MCF 10A (cell line): ENCODE measurements at regions of chr5 and their contacts with region 1.

Region 1: DNA sequence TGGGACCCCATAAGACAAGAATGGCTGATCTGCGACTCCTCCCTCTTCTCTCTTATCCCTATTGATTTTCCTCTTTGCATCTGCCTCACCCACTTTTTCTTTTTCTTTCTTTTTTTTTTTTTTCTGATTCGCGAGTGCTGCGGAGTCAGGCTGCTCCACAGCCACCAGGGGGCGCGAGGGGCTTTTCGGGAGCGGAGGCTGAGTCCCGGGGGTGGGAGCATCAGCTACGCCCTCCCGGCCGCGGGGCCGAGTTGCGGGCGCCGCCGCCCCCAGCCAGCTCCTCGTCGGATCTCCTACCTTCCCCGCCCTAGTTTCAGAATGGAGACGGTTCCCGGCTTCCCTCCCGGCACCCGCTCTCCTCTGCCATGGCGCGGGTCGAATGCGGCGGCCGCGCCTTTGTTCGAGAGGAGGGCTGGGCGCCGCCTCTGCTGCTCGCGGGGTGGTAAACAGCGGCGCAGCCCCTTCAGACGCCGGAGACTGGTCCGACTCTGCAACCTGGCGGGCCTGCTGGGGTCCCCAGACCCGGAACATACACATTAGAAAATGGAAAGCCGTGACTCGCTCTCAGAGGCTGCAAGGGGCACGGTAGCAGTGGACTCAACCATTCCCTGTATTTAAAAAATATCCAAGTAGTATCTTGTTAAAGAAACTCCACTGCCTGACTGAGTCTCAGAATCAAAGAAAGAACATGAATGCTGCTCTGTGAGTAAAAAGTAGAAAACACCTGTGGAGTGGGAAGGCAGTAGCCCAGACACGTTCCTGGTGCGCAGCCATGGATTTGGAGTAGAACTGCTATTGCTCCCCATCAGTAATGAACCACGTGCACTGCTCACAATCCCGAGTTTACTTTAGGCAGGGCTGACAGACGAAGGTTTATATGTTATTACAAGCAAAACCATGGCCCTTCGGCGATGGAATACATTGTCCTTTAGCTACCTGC is 55.7 kb downstream of the DPYSL3 start:
- DNase-seq: peak; percentile 86
- H3K4me3 Mint-ChIP-seq: peak overlapping the region; percentile 84
- H3K27ac Mint-ChIP-seq: peak overlapping the region; percentile 64
- H3K4me1 Mint-ChIP-seq: peaks cover 10% of the 10 kb centered on the region
- H3K27me3 Mint-ChIP-seq: peaks cover 33% of the 10 kb centered on the region
- CTCF ChIP-seq: peak; percentile 97

Region 2: DNA sequence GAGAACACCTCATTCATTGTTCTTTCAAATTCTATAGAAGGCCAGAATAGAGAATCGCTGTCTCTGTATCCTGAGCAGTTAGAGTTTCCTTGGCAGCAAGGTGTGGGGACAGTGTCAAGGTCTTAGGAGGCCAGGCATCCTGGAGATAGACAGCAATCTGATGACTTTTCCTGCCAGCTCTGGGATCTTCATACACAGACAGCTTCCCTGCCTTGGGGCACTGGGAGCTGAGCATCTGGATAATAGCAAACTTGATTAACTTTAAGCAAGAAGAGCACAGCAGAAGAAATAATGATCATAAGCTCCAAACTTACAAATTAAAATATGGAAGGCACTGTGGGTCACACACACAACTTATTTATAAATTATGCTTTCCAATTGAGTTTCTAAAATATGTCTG is 305.4 kb before region 1 on chr5:
- CTCF ChIA-PET with region 1: no interaction called
- POLR2A ChIA-PET with region 1: no interaction called
- intact Hi-C with region 1: no loop called
- DNase-seq: no peak
- H3K4me3 Mint-ChIP-seq: no peak overlapping the region
- H3K27ac Mint-ChIP-seq: no peak overlapping the region
- H3K4me1 Mint-ChIP-seq: no peaks in the 10 kb centered on the region
- H3K27me3 Mint-ChIP-seq: no peaks in the 10 kb centered on the region
- CTCF ChIP-seq: no peak

Region 3: GRCh38 chr5:147203213-147203612 is 250.9 kb before region 1 on chr5:
- CTCF ChIA-PET with region 1: no interaction called
- POLR2A ChIA-PET with region 1: no interaction called
- intact Hi-C with region 1: no loop called
- DNase-seq: no peak
- H3K4me3 Mint-ChIP-seq: no peak overlapping the region
- H3K27ac Mint-ChIP-seq: no peak overlapping the region
- H3K4me1 Mint-ChIP-seq: no peaks in the 10 kb centered on the region
- H3K27me3 Mint-ChIP-seq: peaks cover 40% of the 10 kb centered on the region
- CTCF ChIP-seq: no peak

Region 4: GRCh38 chr5:147267082-147267832 is 186.9 kb before region 1 on chr5:
- CTCF ChIA-PET with region 1: no interaction called
- POLR2A ChIA-PET with region 1: no interaction called
- intact Hi-C with region 1: no loop called
- DNase-seq: no peak
- H3K4me3 Mint-ChIP-seq: no peak overlapping the region
- H3K27ac Mint-ChIP-seq: no peak overlapping the region
- H3K4me1 Mint-ChIP-seq: no peaks in the 10 kb centered on the region
- H3K27me3 Mint-ChIP-seq: peaks cover 10% of the 10 kb centered on the region
- CTCF ChIP-seq: no peak

Region 5: GRCh38 chr5:147397616-147398015 is 56.5 kb before region 1 on chr5:
- CTCF ChIA-PET with region 1: interaction called, 10 read pairs
- POLR2A ChIA-PET with region 1: no interaction called
- intact Hi-C with region 1: no loop called
- DNase-seq: no peak
- H3K4me3 Mint-ChIP-seq: no peak overlapping the region
- H3K27ac Mint-ChIP-seq: no peak overlapping the region
- H3K4me1 Mint-ChIP-seq: no peaks in the 10 kb centered on the region
- H3K27me3 Mint-ChIP-seq: no peaks in the 10 kb centered on the region
- CTCF ChIP-seq: no peak

Region 6: GRCh38 chr5:147427521-147428401 is 26.4 kb before region 1 on chr5:
- CTCF ChIA-PET with region 1: interaction called, 13 read pairs
- POLR2A ChIA-PET with region 1: no interaction called
- intact Hi-C with region 1: no loop called
- DNase-seq: peak; percentile 60
- H3K4me3 Mint-ChIP-seq: no peak overlapping the region
- H3K27ac Mint-ChIP-seq: no peak overlapping the region
- H3K4me1 Mint-ChIP-seq: peaks cover 29% of the 10 kb centered on the region
- H3K27me3 Mint-ChIP-seq: no peaks in the 10 kb centered on the region
- CTCF ChIP-seq: no peak

Region 7: GRCh38 chr5:147472664-147473475 is 18.7 kb after region 1 on chr5:
- CTCF ChIA-PET with region 1: interaction called, 17 read pairs
- POLR2A ChIA-PET with region 1: no interaction called
- intact Hi-C with region 1: no loop called
- DNase-seq: no peak
- H3K4me3 Mint-ChIP-seq: no peak overlapping the region
- H3K27ac Mint-ChIP-seq: no peak overlapping the region
- H3K4me1 Mint-ChIP-seq: peaks cover 5% of the 10 kb centered on the region
- H3K27me3 Mint-ChIP-seq: no peaks in the 10 kb centered on the region
- CTCF ChIP-seq: no peak

Region 8: GRCh38 chr5:147558826-147559225 is 104.7 kb after region 1 on chr5:
- CTCF ChIA-PET with region 1: interaction called, 30 read pairs
- POLR2A ChIA-PET with region 1: interaction called, 3 read pairs
- intact Hi-C with region 1: loop called (anchors 1 kb)
- DNase-seq: peak; percentile 74
- H3K4me3 Mint-ChIP-seq: no peak overlapping the region
- H3K27ac Mint-ChIP-seq: no peak overlapping the region
- H3K4me1 Mint-ChIP-seq: peaks cover 5% of the 10 kb centered on the region
- H3K27me3 Mint-ChIP-seq: no peaks in the 10 kb centered on the region
- CTCF ChIP-seq: peak; percentile 81